ENCODE measurements at regions of chr14 and their contacts with region 1.

Region 1: DNA sequence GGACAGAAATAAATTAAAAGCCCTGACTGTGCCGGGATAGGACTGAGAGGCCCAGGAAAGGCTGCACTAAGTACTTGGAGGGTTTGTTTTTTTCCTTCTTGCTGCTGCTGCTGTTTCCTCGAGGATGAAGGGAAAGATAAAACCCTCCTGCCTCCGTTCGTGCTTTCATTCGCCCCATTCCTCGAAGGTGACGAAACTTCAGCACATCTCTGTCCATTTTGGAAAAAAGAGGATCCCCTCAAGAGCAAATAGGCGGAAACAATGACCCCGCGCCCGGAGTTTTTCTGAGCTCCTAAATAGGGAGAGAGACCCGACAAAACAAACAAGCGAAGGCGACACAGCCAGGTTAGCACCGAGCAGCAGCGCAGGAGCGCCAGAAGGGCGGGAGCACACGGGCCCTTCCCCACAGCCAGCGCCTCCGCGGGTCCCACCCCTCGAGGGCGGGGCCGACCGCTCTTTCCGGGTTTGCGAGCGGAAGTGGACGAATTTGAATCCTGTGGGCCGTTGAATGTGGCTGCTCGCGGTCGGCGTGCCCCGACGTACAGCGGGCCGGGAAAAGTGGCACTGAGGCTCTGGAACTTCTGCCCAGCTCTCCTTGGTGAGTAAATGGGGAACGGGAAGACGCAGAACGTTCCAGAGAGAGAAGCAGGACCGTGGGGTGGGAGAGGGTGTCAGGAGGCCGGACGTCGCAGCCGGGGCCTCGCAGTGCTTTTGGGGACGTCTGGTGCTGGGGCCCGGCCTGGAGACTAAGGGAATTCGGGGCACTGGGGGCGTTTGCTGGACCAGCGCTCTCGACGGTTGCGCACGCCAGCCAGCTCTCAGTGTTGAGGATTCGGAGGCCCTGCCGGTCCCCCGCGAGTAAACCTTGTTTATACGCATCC is at the start of gene G2E3:
- DNase-seq: peak; percentile 92
- ATAC-seq: peak; percentile 99
- H3K4me3 Mint-ChIP-seq: peak within 1 kb of the TSS; percentile 100
- H3K27ac Mint-ChIP-seq: peak within 1 kb of the TSS; percentile 100
- H3K4me1 Mint-ChIP-seq: peaks cover 26% of the 10 kb centered on the region
- H3K27me3 Mint-ChIP-seq: peaks cover 4% of the 10 kb centered on the region
- total RNA-seq, gene G2E3: 38.9 to 46.6 TPM

Region 2: GRCh38 chr14:30621940-30622830 is 63.3 kb after region 1 on chr14 and contains the start of gene SCFD1:
- CTCF ChIA-PET with region 1: interaction called, 3 read pairs
- POLR2A ChIA-PET with region 1: interaction called, 23 read pairs
- DNase-seq: peak; percentile 95
- ATAC-seq: peak; percentile 98
- H3K4me3 Mint-ChIP-seq: peak within 1 kb of the TSS; percentile 89
- H3K27ac Mint-ChIP-seq: peak within 1 kb of the TSS; percentile 95
- H3K4me1 Mint-ChIP-seq: peaks cover 29% of the 10 kb centered on the region
- H3K27me3 Mint-ChIP-seq: no peaks in the 10 kb centered on the region
- total RNA-seq, gene SCFD1: 50.3 to 58.1 TPM

Region 3: GRCh38 chr14:30706704-30707103 is 147.8 kb after region 1 on chr14:
- CTCF ChIA-PET with region 1: no interaction called
- POLR2A ChIA-PET with region 1: no interaction called
- DNase-seq: no peak
- ATAC-seq: no peak
- H3K4me3 Mint-ChIP-seq: no peak overlapping the region
- H3K27ac Mint-ChIP-seq: no peak overlapping the region
- H3K4me1 Mint-ChIP-seq: no peaks in the 10 kb centered on the region
- H3K27me3 Mint-ChIP-seq: no peaks in the 10 kb centered on the region

Region 4: DNA sequence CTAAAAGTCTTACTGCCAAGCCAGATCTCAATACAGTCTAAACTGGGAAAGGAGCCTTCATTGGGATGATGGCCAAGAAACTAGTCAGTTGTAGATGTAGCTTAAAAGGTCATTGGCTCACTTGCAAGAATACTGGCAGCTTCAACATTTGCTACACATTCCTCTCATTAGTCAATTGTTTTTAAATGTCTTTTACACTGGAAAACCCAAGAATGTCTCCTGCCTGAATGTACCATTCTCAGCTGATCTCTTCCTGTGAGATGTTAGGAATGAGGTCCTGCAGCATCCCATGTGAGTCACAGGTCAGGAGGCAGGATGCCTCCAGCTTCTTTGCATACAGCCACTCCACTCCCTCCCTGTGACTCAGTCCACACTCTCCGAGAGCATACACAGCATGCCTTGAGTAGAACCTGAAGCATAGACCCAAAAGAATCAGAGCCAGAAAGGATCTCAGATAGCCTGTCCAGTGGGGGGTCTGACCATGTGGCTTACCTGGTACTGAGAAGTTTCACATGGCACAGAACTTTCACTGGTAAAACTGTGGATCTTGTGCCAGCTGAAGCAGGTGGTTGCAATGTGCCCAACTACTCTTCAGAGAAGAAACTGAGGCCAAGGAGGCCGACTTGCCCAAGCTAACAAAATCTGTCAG is 704.7 kb after region 1 on chr14:
- CTCF ChIA-PET with region 1: no interaction called
- POLR2A ChIA-PET with region 1: no interaction called
- DNase-seq: no peak
- ATAC-seq: no peak
- H3K4me3 Mint-ChIP-seq: no peak overlapping the region
- H3K27ac Mint-ChIP-seq: no peak overlapping the region
- H3K4me1 Mint-ChIP-seq: peaks cover 3% of the 10 kb centered on the region
- H3K27me3 Mint-ChIP-seq: no peaks in the 10 kb centered on the region

Measured in activated CD8-positive, alpha-beta T cell treated with anti-CD3 and anti-CD28 coated beads, Interleukin-2, amount 10 ng/mL, durations not matched to agents 7 days and 5 days (primary cell).